AG04449 (cell line): ENCODE measurements at regions of chr2 and their contacts with region 1.

Region 1: GRCh38 chr2:30208452-30208851 is 22.9 kb upstream of the LBH start:
- DNase-seq: peak; percentile 53
- H3K4me3 ChIP-seq: no peak overlapping the region
- CTCF ChIP-seq: peak; percentile 81

Region 2: DNA sequence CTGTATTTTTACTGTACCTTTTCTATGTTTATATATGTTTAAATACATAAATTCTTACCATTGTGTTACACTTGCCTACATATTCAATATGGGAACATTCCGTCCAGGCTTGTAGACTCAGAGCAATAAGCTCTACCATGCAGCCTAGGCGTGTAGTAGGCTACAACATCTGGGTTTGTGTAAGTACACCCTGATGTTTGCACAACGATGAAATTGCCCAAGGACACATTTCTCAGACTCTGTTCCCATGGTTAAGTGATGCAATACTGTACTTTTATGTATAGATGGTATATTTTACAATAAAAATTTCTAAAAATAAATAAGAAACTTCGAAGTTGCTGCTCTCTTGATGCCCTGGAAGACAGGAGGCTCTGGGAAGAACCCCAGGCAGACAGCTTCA is 23.3 kb before region 1 on chr2:
- CTCF ChIA-PET with region 1: no interaction called
- POLR2A ChIA-PET with region 1: no interaction called
- DNase-seq: peak; percentile 17
- H3K4me3 ChIP-seq: no peak overlapping the region
- CTCF ChIP-seq: no peak

Region 3: GRCh38 chr2:30225131-30225762 is 16.8 kb after region 1 on chr2:
- CTCF ChIA-PET with region 1: interaction called, 71 read pairs
- POLR2A ChIA-PET with region 1: interaction called, 3 read pairs
- DNase-seq: peak; percentile 65
- H3K4me3 ChIP-seq: peak overlapping the region; percentile 53
- CTCF ChIP-seq: no peak

Region 4: GRCh38 chr2:30472326-30472725 is 263.9 kb after region 1 on chr2:
- CTCF ChIA-PET with region 1: interaction called, 11 read pairs
- POLR2A ChIA-PET with region 1: interaction called, 8 read pairs
- DNase-seq: no peak
- H3K4me3 ChIP-seq: no peak overlapping the region
- CTCF ChIP-seq: no peak

Region 5: GRCh38 chr2:30691948-30692828 is 483.7 kb after region 1 on chr2:
- CTCF ChIA-PET with region 1: interaction called, 30 read pairs
- POLR2A ChIA-PET with region 1: no interaction called
- DNase-seq: no peak
- H3K4me3 ChIP-seq: no peak overlapping the region
- CTCF ChIP-seq: peak; percentile 15